HEK293 (cell line): ENCODE measurements at regions of chr2 and their contacts with region 1.

Region 1: DNA sequence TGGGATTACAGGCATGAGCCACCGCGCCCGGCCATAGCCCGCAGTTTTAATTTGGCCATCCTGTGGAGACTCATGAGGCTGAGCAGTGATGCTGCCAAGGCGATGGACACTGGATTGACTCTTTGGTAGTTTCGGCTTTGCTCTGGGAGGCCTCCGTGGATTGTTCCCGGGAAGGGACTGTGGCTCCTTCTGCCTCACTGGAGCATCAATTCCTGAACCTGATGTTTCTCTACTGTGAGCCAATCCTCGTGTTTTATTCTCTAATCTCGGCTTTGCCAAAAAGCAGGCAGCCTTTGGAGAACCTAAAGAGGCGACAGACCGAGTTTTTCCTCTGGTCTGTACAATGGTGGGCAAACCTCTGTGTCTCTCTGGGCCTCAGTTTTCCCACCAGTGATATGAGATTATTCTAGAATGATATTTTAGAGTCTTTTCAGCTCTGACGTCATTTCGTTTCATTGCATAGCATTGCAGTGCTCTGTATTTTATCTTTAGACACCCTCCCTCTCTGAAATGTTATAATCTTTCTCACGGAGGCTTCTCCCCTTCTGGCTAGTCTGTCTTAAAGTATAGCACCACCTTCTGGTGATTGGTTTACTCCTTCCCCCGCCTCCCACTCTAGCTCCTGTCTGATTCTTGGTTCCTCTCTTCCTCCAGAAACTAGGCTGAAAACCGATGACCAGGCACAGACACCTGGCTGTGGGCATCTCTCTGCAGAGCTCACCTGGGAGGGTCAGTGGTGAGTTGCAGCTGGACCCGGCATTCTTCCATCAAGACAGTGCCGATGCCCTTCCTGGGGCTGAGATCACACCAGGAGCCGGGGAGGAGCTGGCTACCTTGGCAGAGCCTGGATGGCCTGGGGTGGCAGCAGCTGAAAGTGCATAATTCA is 341.3 kb downstream of the MYCN start:
- H3K4me3 ChIP-seq: no peak overlapping the region
- H3K27ac ChIP-seq: no peak overlapping the region
- H3K4me1 ChIP-seq: no peaks in the 10 kb centered on the region
- CTCF ChIP-seq: no peak

Region 2: DNA sequence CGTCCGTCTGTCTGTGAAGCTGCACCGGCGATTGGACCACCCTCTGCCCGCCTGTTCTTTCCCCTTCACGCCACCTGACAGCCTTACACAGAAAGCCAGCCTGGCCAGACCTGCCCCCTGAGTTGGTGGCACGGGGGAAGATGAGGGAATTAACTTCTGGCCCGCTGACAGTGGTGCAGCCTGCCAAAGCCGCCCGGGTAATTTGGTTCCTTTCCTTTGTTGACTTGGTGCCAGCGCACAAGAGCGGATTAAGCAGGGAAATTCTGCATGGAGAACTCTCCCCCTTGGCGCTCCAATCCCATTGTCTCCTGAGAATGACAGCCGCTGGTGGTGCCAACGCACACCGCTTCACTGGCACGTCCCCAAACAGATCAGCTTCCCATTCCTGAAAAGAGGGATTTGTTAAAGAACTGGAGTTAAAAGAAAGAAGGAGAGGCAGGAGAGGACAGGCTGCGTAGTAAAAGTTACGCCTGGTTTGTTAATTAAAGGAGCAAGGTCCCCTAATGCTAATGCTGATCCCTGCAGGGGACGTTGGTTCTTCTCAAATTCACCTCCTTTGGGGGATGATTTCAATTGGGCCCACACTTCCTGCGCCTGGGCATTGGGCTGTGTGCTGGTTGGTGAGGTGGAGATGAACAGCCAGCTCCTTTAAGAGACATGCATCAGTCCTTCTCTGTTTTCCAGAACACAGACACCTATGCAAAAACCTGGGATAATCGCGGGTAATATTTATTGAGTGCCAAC is 54.6 kb before region 1 on chr2:
- CTCF ChIA-PET with region 1: no interaction called
- POLR2A ChIA-PET with region 1: no interaction called
- H3K4me3 ChIP-seq: no peak overlapping the region
- H3K27ac ChIP-seq: no peak overlapping the region
- H3K4me1 ChIP-seq: no peaks in the 10 kb centered on the region
- CTCF ChIP-seq: no peak

Region 3: DNA sequence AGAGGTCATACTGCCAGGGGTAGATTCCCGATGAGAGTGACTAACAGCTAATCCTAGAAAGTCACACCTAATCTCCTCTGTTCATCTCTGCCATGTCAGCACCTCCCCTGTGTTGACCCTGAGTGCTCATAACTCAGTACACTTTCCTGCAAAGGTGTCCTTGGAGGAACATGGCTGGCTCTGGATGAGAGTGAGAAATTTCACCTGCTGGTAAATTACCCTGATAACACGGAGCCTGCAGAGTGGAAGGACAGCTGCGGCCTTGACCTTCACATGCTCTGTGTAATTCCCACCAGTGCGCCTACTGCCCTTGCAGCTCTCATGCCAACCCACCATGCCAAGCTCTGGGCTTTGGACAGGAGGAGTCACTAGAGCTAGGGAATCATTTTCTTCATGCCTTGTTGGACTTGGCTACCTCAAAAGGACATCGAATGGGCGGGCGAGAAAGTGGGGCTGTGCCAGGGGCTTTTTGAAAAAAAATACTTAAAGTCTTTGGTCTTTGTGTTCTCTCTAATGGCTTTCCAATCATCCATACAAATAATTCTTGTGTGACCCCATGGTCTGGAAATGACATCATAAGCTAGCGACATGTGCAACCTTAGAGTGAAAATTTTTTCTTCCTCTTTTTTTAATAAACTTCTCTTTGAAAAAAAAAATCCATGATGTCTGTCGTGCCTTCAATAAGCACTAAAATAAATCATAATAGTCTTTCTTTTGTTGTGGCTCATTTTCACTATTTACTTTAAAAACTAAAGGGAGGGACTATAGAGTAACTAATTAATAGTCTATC is 21.5 kb before region 1 on chr2:
- CTCF ChIA-PET with region 1: no interaction called
- POLR2A ChIA-PET with region 1: no interaction called
- H3K4me3 ChIP-seq: no peak overlapping the region
- H3K27ac ChIP-seq: no peak overlapping the region
- H3K4me1 ChIP-seq: no peaks in the 10 kb centered on the region
- CTCF ChIP-seq: no peak

Region 4: GRCh38 chr2:16271231-16271896 is 10.3 kb before region 1 on chr2:
- CTCF ChIA-PET with region 1: interaction called, 15 read pairs
- POLR2A ChIA-PET with region 1: interaction called, 3 read pairs
- H3K4me3 ChIP-seq: no peak overlapping the region
- H3K27ac ChIP-seq: no peak overlapping the region
- H3K4me1 ChIP-seq: no peaks in the 10 kb centered on the region
- CTCF ChIP-seq: no peak